Heart left ventricle (tissue), 16 donors: ENCODE measurements at regions of chr19 and their contacts with region 1.

Region 1: DNA sequence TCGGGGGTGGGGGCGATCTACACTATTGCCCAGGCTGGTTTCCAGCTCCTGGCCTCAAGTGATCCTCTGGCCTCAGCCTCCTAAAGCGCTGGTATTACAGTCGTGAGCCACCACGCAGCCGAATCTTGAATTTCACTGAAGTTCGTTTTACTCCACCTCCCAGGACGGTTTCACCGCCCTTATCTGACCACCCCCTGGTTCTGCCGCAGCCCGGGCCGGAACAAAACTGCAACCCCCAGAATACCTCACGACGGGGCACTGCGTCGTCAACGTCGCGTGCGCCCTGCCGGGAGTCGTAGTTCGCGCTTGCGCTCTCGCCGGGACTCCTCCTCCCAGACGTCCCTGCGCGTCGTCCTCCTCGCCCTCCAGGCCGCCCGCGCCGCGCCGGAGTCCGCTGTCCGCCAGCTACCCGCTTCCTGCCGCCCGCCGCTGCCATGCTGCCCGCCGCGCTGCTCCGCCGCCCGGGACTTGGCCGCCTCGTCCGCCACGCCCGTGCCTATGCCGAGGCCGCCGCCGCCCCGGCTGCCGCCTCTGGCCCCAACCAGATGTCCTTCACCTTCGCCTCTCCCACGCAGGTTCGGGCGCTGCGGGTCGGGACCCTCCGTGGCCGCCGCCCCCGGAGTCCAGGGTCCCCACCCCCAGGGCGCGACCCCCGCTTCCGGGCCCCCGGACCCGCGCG is at the start of gene ATP5F1D:
- DNase-seq: peak; percentile 95 to 98 (median 97)
- ATAC-seq: peak; percentile 27 to 65 (median 58)
- H3K4me3 ChIP-seq: peak within 1 kb of the TSS; percentile 62 to 99 (median 92)
- H3K27ac ChIP-seq: peak within 1 kb of the TSS; percentile 95 to 100 (median 100)
- H3K4me1 ChIP-seq: peaks cover 10 to 86% (median 70%) of the 10 kb centered on the region in 12 donors
- H3K27me3 ChIP-seq: peaks cover 0 to 10% (median 0%) of the 10 kb centered on the region in 9 donors
- CTCF ChIP-seq: no peak
- POLR2A ChIP-seq: peak in 1 of 2 donors; percentile 93
- total RNA-seq, gene ATP5F1D: 201 to 584 (median 450) TPM

Region 2: GRCh38 chr19:1113033-1113985 is 128.2 kb before region 1 on chr19:
- intact Hi-C with region 1: loop called in 2 of 10 experiments (anchors 1 to 5 kb)
- DNase-seq: peak; percentile 97 to 99 (median 97)
- ATAC-seq: peak; percentile 89 to 96 (median 90)
- H3K4me3 ChIP-seq: peak overlapping the region in 5 of 12 donors; percentile 16 to 37 (median 28)
- H3K27ac ChIP-seq: peak overlapping the region in 11 of 12 donors; percentile 54 to 85 (median 70)
- H3K4me1 ChIP-seq: peaks cover 5 to 29% (median 16%) of the 10 kb centered on the region in 12 donors
- H3K27me3 ChIP-seq: no peaks in the 10 kb centered on the region
- CTCF ChIP-seq: peak; percentile 84 to 100 (median 97)
- POLR2A ChIP-seq: no peak

Region 3: GRCh38 chr19:1213391-1214286 is 27.9 kb before region 1 on chr19:
- intact Hi-C with region 1: loop called in 2 of 10 experiments (anchors 2 kb)
- DNase-seq: peak; percentile 72 to 87 (median 81)
- ATAC-seq: peak; percentile 38 to 72 (median 58)
- H3K4me3 ChIP-seq: peak overlapping the region in 7 of 12 donors; percentile 7 to 31 (median 19)
- H3K27ac ChIP-seq: peak overlapping the region; percentile 80 to 96 (median 88)
- H3K4me1 ChIP-seq: peaks cover 19 to 96% (median 79%) of the 10 kb centered on the region in 12 donors
- H3K27me3 ChIP-seq: no peaks in the 10 kb centered on the region
- CTCF ChIP-seq: no peak
- POLR2A ChIP-seq: peak in 1 of 2 donors; percentile 23

Region 4: GRCh38 chr19:1221141-1221903 is 20.2 kb before region 1 on chr19:
- intact Hi-C with region 1: loop called in 3 of 10 experiments (anchors 1 to 2 kb)
- DNase-seq: peak; percentile 73 to 88 (median 84)
- ATAC-seq: peak; percentile 62 to 74 (median 66)
- H3K4me3 ChIP-seq: no peak overlapping the region
- H3K27ac ChIP-seq: peak overlapping the region in 9 of 12 donors; percentile 18 to 70 (median 35)
- H3K4me1 ChIP-seq: peaks cover 6 to 68% (median 49%) of the 10 kb centered on the region in 12 donors
- H3K27me3 ChIP-seq: no peaks in the 10 kb centered on the region
- CTCF ChIP-seq: peak; percentile 54 to 85 (median 72)
- POLR2A ChIP-seq: no peak

Region 5: GRCh38 chr19:1269065-1269477 is 27.5 kb after region 1 on chr19 and contains the start of gene CIRBP:
- intact Hi-C with region 1: loop called (anchors 1 to 2 kb)
- DNase-seq: peak; percentile 100
- ATAC-seq: peak; percentile 69 to 85 (median 78)
- H3K4me3 ChIP-seq: peak within 1 kb of the TSS; percentile 5 to 92 (median 72)
- H3K27ac ChIP-seq: peak within 1 kb of the TSS; percentile 92 to 100 (median 98)
- H3K4me1 ChIP-seq: peaks cover 9 to 86% (median 81%) of the 10 kb centered on the region in 12 donors
- H3K27me3 ChIP-seq: no peaks in the 10 kb centered on the region
- CTCF ChIP-seq: peak in 2 of 12 donors; percentile 11 to 15
- POLR2A ChIP-seq: peak; percentile 99 to 100
- total RNA-seq, gene CIRBP: 149 to 425 (median 269) TPM